Activated CD4-positive, alpha-beta T cell treated with anti-CD3 and anti-CD28 coated beads, Interleukin-2, amount 10 ng/mL, durations not matched to agents 24 days and 14 days (primary cell): ENCODE measurements at regions of chr13 and their contacts with region 1.

Region 1: GRCh38 chr13:19863323-19864023 is at the start of gene ZMYM5:
- DNase-seq: peak; percentile 99
- H3K4me3 Mint-ChIP-seq: peak within 1 kb of the TSS; percentile 98
- H3K27ac Mint-ChIP-seq: peak within 1 kb of the TSS; percentile 98
- H3K4me1 Mint-ChIP-seq: peaks cover 34% of the 10 kb centered on the region
- H3K27me3 Mint-ChIP-seq: no peaks in the 10 kb centered on the region
- total RNA-seq, gene ZMYM5: 12.9 and 13.4 TPM in 2 replicates

Region 2: DNA sequence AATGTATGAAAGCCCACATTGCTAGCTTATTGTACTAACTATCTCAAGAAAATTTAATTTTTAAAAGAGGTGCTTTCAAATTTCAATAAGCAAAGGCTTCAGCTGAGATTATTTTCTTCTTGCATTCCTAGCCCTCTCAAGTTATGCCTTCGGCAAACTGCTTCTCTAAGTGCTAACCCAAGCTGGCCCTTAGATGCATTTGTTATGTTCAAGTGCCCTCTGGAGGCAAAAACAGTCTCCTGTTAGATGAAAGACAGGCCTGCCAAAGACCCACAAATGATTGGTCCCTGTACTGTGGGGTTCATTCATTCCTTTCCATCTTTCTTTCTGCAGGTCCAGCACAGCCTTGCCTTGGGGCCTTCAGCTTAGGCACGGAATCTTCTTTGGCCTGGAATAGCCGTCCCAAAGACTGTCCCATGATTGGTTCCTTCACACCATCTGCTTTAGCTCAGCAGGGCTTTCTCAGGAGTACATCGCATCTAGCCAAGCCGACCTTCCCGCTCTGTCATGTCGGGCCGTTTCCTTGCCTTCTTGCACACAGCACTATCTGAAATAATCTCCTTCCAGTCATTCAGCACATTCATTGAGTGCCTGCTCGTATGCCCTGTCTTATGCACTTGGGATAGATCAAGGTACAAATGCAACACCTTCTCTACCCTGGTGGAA is 275.7 kb before region 1 on chr13:
- intact Hi-C with region 1: loop called (anchors 2 kb)
- DNase-seq: peak; percentile 82
- H3K4me3 Mint-ChIP-seq: peak overlapping the region; percentile 73
- H3K27ac Mint-ChIP-seq: peak overlapping the region; percentile 82
- H3K4me1 Mint-ChIP-seq: peaks cover 15% of the 10 kb centered on the region
- H3K27me3 Mint-ChIP-seq: peaks cover 8% of the 10 kb centered on the region

Region 3: GRCh38 chr13:19633479-19634255 is 229.8 kb before region 1 on chr13 and contains the start of gene MPHOSPH8:
- intact Hi-C with region 1: loop called (anchors 1 kb)
- DNase-seq: peak; percentile 98
- H3K4me3 Mint-ChIP-seq: peak within 1 kb of the TSS; percentile 100
- H3K27ac Mint-ChIP-seq: peak within 1 kb of the TSS; percentile 97
- H3K4me1 Mint-ChIP-seq: peaks cover 26% of the 10 kb centered on the region
- H3K27me3 Mint-ChIP-seq: peaks cover 4% of the 10 kb centered on the region
- total RNA-seq, gene MPHOSPH8: 40.3 and 41.1 TPM in 2 replicates

Region 4: DNA sequence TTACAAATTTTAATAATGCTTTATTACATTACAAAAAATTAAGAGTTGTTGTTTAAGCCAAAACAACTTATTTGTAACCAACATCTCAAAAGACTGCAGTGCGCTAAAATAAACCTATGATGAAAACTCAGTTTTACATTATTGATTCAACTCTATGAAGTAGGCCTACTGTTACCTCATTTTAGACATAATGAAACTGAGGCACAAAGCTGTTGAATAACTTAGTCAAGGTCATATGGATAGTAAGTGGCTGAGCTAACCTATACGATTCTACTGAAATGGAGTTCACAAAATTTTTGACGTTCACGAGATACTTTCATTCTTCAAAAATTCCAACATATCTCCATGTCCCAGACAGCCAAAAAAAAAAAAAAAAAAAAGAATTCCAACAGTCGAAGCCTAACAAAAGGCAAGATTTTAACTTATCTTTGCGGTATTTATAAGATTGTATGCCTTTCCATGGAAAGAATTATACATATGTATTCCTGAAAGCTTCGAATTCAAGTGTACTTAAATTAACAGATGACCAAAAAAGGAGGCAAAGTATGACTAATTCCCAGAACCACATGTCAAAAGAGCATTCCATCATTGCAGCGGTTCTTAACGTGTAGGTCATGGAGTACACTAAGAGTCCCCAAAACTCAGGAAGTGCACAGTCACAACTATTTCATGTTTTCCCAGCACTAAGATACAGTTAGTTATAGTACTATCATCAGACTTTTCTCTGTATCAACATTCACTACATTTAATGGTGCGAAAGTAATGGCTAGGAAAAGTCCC is 150.1 kb before region 1 on chr13:
- intact Hi-C with region 1: loop called (anchors 5 kb)
- DNase-seq: no peak
- H3K4me3 Mint-ChIP-seq: no peak overlapping the region
- H3K27ac Mint-ChIP-seq: peak overlapping the region; percentile 64
- H3K4me1 Mint-ChIP-seq: peaks cover 7% of the 10 kb centered on the region
- H3K27me3 Mint-ChIP-seq: no peaks in the 10 kb centered on the region

Region 5: DNA sequence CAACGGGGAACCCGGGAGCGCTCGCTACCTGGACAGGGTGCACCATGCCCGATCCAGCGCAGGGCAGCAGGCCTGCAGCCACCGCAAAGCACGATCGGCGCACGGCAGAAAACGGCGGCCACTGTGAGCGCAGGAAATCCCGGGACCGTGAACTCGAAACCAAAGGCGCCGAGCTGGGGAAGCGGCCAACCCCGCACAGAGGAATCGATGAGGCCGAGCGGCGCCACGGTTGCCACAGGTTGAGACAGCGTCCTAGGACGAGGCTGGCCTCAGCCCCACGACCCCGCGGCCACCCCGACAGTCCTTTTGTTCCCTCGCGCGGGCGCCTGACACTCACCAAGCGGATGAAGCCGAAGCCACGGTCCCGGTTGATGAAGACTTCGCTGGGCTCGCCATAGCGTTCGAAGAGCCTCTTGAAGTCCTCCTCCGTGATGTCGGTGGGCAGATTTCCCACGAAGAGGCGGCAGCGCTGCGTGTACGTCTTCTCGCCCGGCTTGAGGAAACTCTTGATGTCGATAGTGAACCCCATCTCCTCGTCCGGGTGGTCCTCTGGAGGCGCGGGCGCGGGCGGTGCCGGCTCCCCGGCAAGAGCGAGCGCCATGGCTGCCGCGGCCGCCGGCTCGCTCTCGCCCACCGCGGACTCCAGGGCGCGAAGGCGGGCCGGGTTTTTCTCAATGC is 81.3 kb before region 1 on chr13:
- intact Hi-C with region 1: loop called (anchors 1 kb)
- DNase-seq: peak; percentile 91
- H3K4me3 Mint-ChIP-seq: peak overlapping the region; percentile 96
- H3K27ac Mint-ChIP-seq: peak overlapping the region; percentile 99
- H3K4me1 Mint-ChIP-seq: peaks cover 6% of the 10 kb centered on the region
- H3K27me3 Mint-ChIP-seq: peaks cover 2% of the 10 kb centered on the region